Right ventricle myocardium superior (tissue), 1 donor: ENCODE measurements at regions of chr6 and their contacts with region 1.

Region 1: GRCh38 chr6:159134701-159135364 is 34.4 kb upstream of the FNDC1 start:
- DNase-seq: no peak
- ATAC-seq: peak; percentile 84

Region 2: DNA sequence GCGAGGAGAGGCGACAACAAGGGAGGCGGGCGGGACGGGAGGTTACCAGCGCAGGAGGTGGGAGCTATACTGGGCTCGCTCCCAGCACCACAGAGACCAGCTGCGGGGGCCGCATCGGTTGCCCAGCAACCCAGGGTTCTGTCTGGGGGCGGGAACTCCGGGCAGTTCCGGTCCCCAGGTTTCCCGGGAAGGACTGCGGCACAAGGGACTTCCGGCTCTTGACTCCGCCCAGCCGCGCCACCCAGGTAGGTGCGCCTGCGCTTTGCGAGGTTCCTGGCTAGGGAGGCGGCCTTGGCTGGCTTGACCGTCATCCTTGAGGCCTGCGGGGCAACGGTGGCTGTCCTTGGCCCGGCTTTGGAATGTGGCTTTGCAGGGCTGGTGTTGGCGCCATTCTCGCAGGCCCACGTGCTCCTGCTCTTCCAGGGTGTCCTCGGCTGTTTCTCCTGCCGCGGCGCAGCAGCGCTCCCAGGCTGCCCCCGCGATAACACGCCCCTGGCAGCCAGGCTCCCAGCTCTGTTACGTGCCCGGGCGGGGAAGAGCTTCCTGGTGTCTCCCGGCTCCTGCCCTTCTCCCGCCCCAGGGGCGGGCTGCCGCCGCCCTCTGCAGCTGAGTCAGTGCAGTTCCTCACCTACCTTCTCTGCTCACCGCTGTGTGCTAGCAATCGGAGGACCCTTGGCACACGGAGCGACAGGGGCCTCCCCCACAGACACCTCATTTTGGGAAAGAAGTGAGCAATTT is 135.0 kb before region 1 on chr6 and contains the start of gene RSPH3:
- intact Hi-C with region 1: loop called (anchors 10 kb)
- DNase-seq: peak; percentile 96
- ATAC-seq: peak; percentile 96
- total RNA-seq, gene RSPH3: 9.5 TPM

Region 3: DNA sequence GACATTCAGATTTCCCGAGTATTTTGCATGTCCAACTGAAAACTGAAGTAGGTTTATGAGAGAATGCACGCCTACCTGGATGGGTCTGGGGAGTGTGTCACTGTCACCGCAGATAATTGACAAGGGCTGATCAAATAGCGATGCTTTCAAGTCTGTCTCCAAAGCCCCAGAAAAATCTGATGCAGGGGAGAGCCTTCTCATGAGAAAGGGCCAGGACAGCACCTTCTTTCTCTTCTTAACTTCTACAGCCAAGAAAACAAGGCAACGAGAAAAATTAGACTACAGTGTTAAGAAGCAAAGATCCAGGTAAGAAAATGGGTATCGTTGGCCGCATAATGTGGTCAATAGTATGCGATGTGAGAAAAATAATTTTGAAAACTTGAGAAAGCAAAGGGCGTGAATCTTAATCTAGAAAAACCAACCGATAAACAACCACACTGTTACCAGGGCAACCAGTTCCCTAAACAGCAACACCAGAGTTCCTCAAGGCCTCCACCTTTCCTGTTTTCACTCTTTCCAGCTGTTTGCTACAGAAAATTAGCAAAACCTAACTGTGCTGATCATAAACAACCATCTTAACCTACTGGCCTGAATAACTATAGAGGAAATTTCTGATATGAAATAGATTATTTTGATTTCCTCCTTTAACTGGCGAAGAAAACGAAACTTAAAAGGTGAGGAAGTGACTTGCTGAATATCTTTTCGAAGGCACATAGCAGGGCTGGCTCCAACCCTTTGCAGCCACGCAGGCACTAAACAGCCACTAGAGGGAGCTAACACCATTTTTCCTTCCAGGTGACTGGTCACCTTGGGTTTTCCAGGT is 92.6 kb before region 1 on chr6:
- intact Hi-C with region 1: loop called (anchors 5 kb)
- DNase-seq: peak; percentile 49
- ATAC-seq: peak; percentile 82